GM13977 (cell line): ENCODE measurements at regions of chr1 and their contacts with region 1.

Region 1: DNA sequence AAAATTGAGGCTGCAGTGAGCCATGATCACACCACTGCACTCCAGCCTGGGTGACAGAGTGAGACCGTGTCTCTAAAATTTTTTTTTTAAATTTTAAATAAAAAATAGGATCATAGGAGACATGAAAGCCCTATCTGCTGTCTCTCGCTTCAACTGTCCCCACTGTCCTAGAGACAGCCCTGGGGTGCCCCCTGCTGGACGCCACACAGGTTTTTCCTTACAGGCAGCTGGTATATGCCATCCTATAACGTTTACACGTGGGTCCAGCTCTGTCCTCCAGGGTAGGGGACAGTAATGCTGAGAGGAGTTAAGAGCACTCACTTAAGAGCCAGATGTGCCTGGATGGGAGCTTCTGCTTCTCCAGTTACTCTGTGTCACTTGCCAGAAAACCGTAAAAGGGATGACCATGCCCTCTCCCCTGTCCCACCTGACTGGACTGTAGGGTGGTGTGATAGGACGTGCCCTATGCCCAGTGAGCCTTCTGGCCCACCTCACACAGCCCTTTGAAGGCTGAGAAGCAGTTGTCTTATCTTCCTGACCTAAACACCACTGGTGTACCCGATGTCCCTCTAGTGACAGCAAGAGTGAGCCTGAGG is 8.5 kb downstream of the FBXO2 start:
- DNase-seq: peak; percentile 78
- CTCF ChIP-seq: peak; percentile 78

Region 2: GRCh38 chr1:11037740-11038182 is 608.0 kb before region 1 on chr1:
- in situ Hi-C with region 1: loop called (anchors 25 kb)
- DNase-seq: peak; percentile 90
- CTCF ChIP-seq: peak; percentile 98

Region 3: GRCh38 chr1:11337580-11338073 is 308.1 kb before region 1 on chr1:
- in situ Hi-C with region 1: loop called (anchors 25 kb)
- DNase-seq: peak; percentile 82
- CTCF ChIP-seq: peak; percentile 85